ENCODE measurements at regions of chr7 and their contacts with region 1.

Region 1: DNA sequence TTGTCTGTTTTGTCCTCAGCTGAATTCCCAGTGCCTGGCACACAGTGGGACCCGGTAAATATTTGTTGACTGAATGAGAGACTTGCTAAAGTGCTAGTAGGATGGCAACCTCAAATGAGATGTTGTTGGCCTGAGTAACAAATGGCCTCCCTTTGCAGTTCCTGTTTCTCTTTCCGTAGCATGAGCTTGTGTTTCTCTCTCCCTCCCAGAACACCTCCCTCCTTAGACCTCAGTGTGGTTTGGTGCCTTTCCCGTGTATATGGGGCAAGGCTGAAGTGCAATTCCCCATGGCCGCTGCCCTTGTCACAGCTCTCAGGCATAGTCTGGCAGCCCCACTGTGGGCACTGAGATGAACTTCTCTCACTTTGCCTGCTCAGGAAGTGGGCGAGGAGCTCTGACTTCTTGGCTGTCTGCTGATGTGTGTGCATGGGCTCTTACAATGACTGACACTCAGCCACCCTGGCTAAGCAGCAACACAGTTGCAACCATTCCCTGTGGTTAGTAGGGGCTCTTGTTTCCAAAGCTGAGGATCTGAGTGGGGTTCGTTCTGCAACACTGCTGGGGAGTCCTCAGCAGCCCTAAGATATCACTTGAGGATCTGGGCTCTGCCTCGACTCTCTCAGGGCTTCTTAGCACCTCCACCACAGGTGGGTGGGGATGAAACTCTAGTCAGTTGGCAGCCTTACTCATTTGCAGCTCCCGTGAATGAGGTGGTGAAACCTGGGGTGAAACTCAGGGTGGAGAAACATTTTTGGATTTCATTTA is 136.1 kb downstream of the ICA1 start:
- DNase-seq: peak; percentile 60 to 93 (median 76)
- ATAC-seq: peak; percentile 94
- H3K4me3 ChIP-seq: no peak overlapping the region
- H3K4me3 Mint-ChIP-seq: peak overlapping the region; percentile 56
- H3K27ac ChIP-seq: peak overlapping the region; percentile 74 to 83
- H3K27ac Mint-ChIP-seq: peak overlapping the region; percentile 96
- H3K4me1 ChIP-seq: peaks cover 83% of the 10 kb centered on the region
- H3K4me1 Mint-ChIP-seq: peaks cover 82% of the 10 kb centered on the region
- H3K27me3 ChIP-seq: no peaks in the 10 kb centered on the region
- H3K27me3 Mint-ChIP-seq: no peaks in the 10 kb centered on the region
- CTCF ChIP-seq: no peak

Region 2: GRCh38 chr7:8042796-8043535 is 82.9 kb before region 1 on chr7:
- CTCF ChIA-PET with region 1: no interaction called
- POLR2A ChIA-PET with region 1: interaction called, 4 read pairs
- intact Hi-C with region 1: loop called in 1 of 2 experiments (anchors 10 kb)
- DNase-seq: no peak
- ATAC-seq: no peak
- H3K4me3 ChIP-seq: no peak overlapping the region
- H3K4me3 Mint-ChIP-seq: no peak overlapping the region
- H3K27ac ChIP-seq: no peak overlapping the region
- H3K27ac Mint-ChIP-seq: peak overlapping the region; percentile 29
- H3K4me1 ChIP-seq: peaks cover 12% of the 10 kb centered on the region
- H3K4me1 Mint-ChIP-seq: peaks cover 86% of the 10 kb centered on the region
- H3K27me3 ChIP-seq: no peaks in the 10 kb centered on the region
- H3K27me3 Mint-ChIP-seq: no peaks in the 10 kb centered on the region
- CTCF ChIP-seq: no peak

Region 3: GRCh38 chr7:8105449-8106095 is 20.3 kb before region 1 on chr7:
- CTCF ChIA-PET with region 1: interaction called, 4 read pairs
- POLR2A ChIA-PET with region 1: interaction called, 10 read pairs
- intact Hi-C with region 1: no loop called
- DNase-seq: peak in 1 of 14 experiments; percentile 15
- ATAC-seq: peak; percentile 51
- H3K4me3 ChIP-seq: no peak overlapping the region
- H3K4me3 Mint-ChIP-seq: peak overlapping the region; percentile 11
- H3K27ac ChIP-seq: peak overlapping the region; percentile 5 to 32
- H3K27ac Mint-ChIP-seq: peak overlapping the region; percentile 81
- H3K4me1 ChIP-seq: peaks cover 24% of the 10 kb centered on the region
- H3K4me1 Mint-ChIP-seq: peaks cover 41% of the 10 kb centered on the region
- H3K27me3 ChIP-seq: no peaks in the 10 kb centered on the region
- H3K27me3 Mint-ChIP-seq: no peaks in the 10 kb centered on the region
- CTCF ChIP-seq: no peak

Region 4: GRCh38 chr7:8143151-8143874 is 17.5 kb after region 1 on chr7:
- CTCF ChIA-PET with region 1: interaction called, 3 read pairs
- POLR2A ChIA-PET with region 1: interaction called, 21 read pairs
- intact Hi-C with region 1: no loop called
- DNase-seq: peak in 4 of 14 experiments; percentile 41 to 62 (median 45)
- ATAC-seq: peak; percentile 55
- H3K4me3 ChIP-seq: peak overlapping the region; percentile 27
- H3K4me3 Mint-ChIP-seq: peak overlapping the region; percentile 12
- H3K27ac ChIP-seq: peak overlapping the region in 1 of 2 donors; percentile 47
- H3K27ac Mint-ChIP-seq: peak overlapping the region; percentile 71
- H3K4me1 ChIP-seq: peaks cover 28% of the 10 kb centered on the region
- H3K4me1 Mint-ChIP-seq: peaks cover 82% of the 10 kb centered on the region
- H3K27me3 ChIP-seq: no peaks in the 10 kb centered on the region
- H3K27me3 Mint-ChIP-seq: no peaks in the 10 kb centered on the region
- CTCF ChIP-seq: no peak

Region 5: GRCh38 chr7:8190119-8190895 is 64.4 kb after region 1 on chr7:
- CTCF ChIA-PET with region 1: interaction called, 11 read pairs
- POLR2A ChIA-PET with region 1: interaction called, 11 read pairs
- intact Hi-C with region 1: loop called in 1 of 2 experiments (anchors 2 kb)
- DNase-seq: peak; percentile 40 to 85 (median 66)
- ATAC-seq: peak; percentile 97
- H3K4me3 ChIP-seq: no peak overlapping the region
- H3K4me3 Mint-ChIP-seq: no peak overlapping the region
- H3K27ac ChIP-seq: no peak overlapping the region
- H3K27ac Mint-ChIP-seq: peak overlapping the region; percentile 24
- H3K4me1 ChIP-seq: peaks cover 8% of the 10 kb centered on the region
- H3K4me1 Mint-ChIP-seq: peaks cover 32% of the 10 kb centered on the region
- H3K27me3 ChIP-seq: no peaks in the 10 kb centered on the region
- H3K27me3 Mint-ChIP-seq: no peaks in the 10 kb centered on the region
- CTCF ChIP-seq: peak; percentile 86

Region 6: GRCh38 chr7:8724080-8724718 is 598.3 kb after region 1 on chr7:
- CTCF ChIA-PET with region 1: no interaction called
- POLR2A ChIA-PET with region 1: no interaction called
- intact Hi-C with region 1: no loop called
- DNase-seq: peak in 1 of 14 experiments; percentile 1
- ATAC-seq: no peak
- H3K4me3 ChIP-seq: no peak overlapping the region
- H3K4me3 Mint-ChIP-seq: no peak overlapping the region
- H3K27ac ChIP-seq: no peak overlapping the region
- H3K27ac Mint-ChIP-seq: no peak overlapping the region
- H3K4me1 ChIP-seq: no peaks in the 10 kb centered on the region
- H3K4me1 Mint-ChIP-seq: no peaks in the 10 kb centered on the region
- H3K27me3 ChIP-seq: no peaks in the 10 kb centered on the region
- H3K27me3 Mint-ChIP-seq: no peaks in the 10 kb centered on the region
- CTCF ChIP-seq: no peak